BJ (cell line): ENCODE measurements at regions of chr1 and their contacts with region 1.

Region 1: DNA sequence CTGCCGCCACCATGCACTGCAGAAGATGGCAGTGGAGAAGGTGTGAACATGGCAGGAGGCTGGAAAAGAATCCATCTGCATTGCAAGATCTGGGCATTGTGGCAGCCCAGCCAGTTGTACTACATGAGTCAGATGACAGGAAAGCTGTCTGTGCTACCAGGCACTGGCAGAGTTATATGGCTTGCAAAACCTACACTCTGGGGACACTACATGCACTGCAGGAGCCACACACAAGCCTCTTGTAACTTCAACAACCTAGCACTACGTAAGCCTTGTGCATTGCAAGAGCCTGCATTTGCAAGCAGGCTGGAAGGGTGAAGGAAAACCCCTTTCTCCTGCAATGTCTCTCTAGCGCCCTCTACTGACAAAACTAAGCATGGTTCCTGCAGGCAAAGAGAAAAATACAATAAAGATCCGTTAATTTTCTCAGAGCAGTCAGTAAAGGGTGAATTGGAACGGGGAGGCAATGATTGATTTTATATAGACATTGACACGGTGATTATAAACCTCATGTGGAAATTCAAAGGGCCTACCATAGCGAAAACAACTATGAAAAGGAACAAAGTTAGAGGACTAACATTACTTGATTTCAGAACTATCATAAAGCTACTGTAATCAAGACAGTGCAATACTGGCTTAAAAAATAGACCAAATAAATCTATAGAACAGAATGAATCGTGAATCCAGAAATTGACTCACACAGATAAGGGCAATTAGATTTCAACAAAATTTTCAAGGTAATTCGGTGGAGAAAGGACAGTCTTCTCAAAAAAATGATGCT is 26.2 kb upstream of the DYNLT5 start:
- DNase-seq: no peak
- H3K4me3 ChIP-seq: no peak overlapping the region
- H3K27me3 ChIP-seq: no peaks in the 10 kb centered on the region
- CTCF ChIP-seq: peak; percentile 99

Region 2: DNA sequence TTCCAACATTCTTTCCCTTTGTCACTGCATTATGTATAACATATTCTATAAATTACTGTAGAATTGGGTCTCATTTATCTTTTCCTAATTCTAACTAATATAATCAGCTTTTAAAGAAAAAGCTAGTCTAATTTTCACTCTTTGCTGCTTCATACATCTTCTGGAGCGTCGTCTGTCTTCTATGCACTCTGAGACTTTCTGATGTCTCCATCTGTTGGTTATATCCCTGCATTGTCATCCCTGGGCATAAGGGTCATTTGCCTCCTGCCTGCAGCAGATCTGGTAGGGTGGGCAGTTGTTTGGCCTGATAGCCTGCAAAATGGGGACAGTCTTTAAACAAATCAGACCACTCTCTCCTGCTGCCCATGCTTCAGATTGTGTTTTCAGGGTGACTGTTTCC is 14.7 kb before region 1 on chr1:
- CTCF ChIA-PET with region 1: interaction called, 29 read pairs
- POLR2A ChIA-PET with region 1: no interaction called
- DNase-seq: no peak
- H3K4me3 ChIP-seq: no peak overlapping the region
- H3K27me3 ChIP-seq: no peaks in the 10 kb centered on the region
- CTCF ChIP-seq: peak; percentile 42